CD14-positive monocyte (primary cell): ENCODE measurements at regions of chr11 and their contacts with region 1.

Region 1: GRCh38 chr11:65540297-65541092 is 15.6 kb downstream of the SCYL1 start:
- DNase-seq: peak; percentile 85 to 86 (median 85)
- H3K4me3 ChIP-seq: peak overlapping the region; percentile 48 to 90 (median 51)
- H3K4me3 Mint-ChIP-seq: peak overlapping the region; percentile 82 to 86
- H3K27ac ChIP-seq: peak overlapping the region; percentile 20 to 49
- H3K27ac Mint-ChIP-seq: peak overlapping the region; percentile 21 to 88 (median 85)
- H3K4me1 ChIP-seq: peaks cover 11 to 27% of the 10 kb centered on the region in 2 donors
- H3K4me1 Mint-ChIP-seq: peaks cover 13% of the 10 kb centered on the region
- H3K27me3 ChIP-seq: no peaks in the 10 kb centered on the region
- H3K27me3 Mint-ChIP-seq: peaks cover 5 to 8% (median 5%) of the 10 kb centered on the region in 3 donors
- CTCF ChIP-seq: peak; percentile 80

Region 2: GRCh38 chr11:65261591-65262380 is 278.7 kb before region 1 on chr11 and contains the start of gene POLA2:
- intact Hi-C with region 1: loop called in 1 of 2 experiments (anchors 10 kb)
- DNase-seq: peak; percentile 96 to 97 (median 97)
- H3K4me3 ChIP-seq: peak within 1 kb of the TSS; percentile 57 to 98 (median 91)
- H3K4me3 Mint-ChIP-seq: peak within 1 kb of the TSS; percentile 88 to 93
- H3K27ac ChIP-seq: peak within 1 kb of the TSS; percentile 90 to 94
- H3K27ac Mint-ChIP-seq: peak within 1 kb of the TSS; percentile 84 to 97 (median 92)
- H3K4me1 ChIP-seq: peaks cover 16 to 24% of the 10 kb centered on the region in 2 donors
- H3K4me1 Mint-ChIP-seq: peaks cover 29% of the 10 kb centered on the region
- H3K27me3 ChIP-seq: no peaks in the 10 kb centered on the region
- H3K27me3 Mint-ChIP-seq: peaks cover 0 to 9% (median 2%) of the 10 kb centered on the region in 3 donors
- CTCF ChIP-seq: no peak
- polyA plus RNA-seq, gene POLA2: 4.0 to 8.3 (median 5.2) TPM

Region 3: DNA sequence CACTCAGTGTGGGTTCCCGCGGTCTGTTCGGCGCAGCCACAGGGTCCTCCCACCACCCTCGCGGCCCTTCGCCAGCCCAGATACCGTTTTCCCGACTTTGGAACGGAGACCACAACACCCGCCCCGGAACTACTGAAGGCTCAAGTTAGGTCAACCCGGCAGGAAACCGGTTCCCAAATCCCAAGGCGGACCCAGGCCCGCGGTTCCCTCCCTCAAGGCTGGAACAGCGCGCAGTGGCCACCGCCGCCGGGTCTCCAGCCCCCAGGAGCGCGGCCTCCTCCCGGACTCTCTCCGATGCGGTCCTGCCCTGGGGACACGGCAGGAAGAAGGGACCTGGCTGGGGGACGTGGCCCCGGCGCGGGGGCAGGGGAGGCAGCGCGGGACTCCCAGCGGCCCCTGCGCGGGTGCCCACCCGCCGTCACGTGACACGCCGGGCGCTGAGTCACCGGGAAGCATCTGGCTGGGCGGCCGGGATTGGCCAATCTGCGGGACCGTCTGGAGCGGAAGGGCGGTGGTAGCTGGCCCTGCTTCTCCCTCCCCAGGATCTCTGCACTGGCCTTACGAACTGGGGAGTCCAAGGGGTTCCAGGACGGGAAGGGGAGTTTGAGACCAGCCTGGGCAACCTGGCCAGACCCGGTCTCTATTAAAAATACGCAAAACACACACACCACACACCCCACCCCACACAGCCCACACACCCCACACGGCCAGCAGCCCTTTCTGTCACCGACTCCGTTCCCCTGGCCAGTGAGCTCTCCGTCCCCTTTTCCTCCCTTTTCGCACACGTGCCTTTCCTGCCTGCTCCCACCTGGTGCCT is 63.1 kb before region 1 on chr11:
- intact Hi-C with region 1: no loop called
- DNase-seq: peak; percentile 96 to 98 (median 96)
- H3K4me3 ChIP-seq: peak overlapping the region; percentile 81 to 88 (median 82)
- H3K4me3 Mint-ChIP-seq: peak overlapping the region; percentile 93 to 94
- H3K27ac ChIP-seq: peak overlapping the region; percentile 97 to 100
- H3K27ac Mint-ChIP-seq: peak overlapping the region; percentile 98 to 100 (median 99)
- H3K4me1 ChIP-seq: peaks cover 39 to 50% of the 10 kb centered on the region in 2 donors
- H3K4me1 Mint-ChIP-seq: peaks cover 37% of the 10 kb centered on the region
- H3K27me3 ChIP-seq: no peaks in the 10 kb centered on the region
- H3K27me3 Mint-ChIP-seq: peaks cover 0 to 7% (median 2%) of the 10 kb centered on the region in 3 donors
- CTCF ChIP-seq: no peak

Region 4: GRCh38 chr11:65569973-65570918 is 29.8 kb after region 1 on chr11 and contains the start of gene ZNRD2:
- intact Hi-C with region 1: loop called in 1 of 2 experiments (anchors 2 kb)
- DNase-seq: peak; percentile 97 to 98 (median 98)
- H3K4me3 ChIP-seq: peak within 1 kb of the TSS; percentile 88 to 100 (median 96)
- H3K4me3 Mint-ChIP-seq: peak within 1 kb of the TSS; percentile 95 to 98
- H3K27ac ChIP-seq: peak within 1 kb of the TSS; percentile 95 to 96
- H3K27ac Mint-ChIP-seq: peak within 1 kb of the TSS; percentile 95 to 98 (median 98)
- H3K4me1 ChIP-seq: peaks cover 60 to 70% of the 10 kb centered on the region in 2 donors
- H3K4me1 Mint-ChIP-seq: peaks cover 68% of the 10 kb centered on the region
- H3K27me3 ChIP-seq: no peaks in the 10 kb centered on the region
- H3K27me3 Mint-ChIP-seq: peaks cover 0 to 2% (median 0%) of the 10 kb centered on the region in 3 donors
- CTCF ChIP-seq: peak; percentile 26
- polyA plus RNA-seq, gene ZNRD2: 48.5 to 65.1 (median 56.2) TPM

Region 5: GRCh38 chr11:65588199-65589054 is 47.9 kb after region 1 on chr11:
- intact Hi-C with region 1: loop called in 1 of 2 experiments (anchors 1 kb)
- DNase-seq: peak; percentile 66 to 83 (median 81)
- H3K4me3 ChIP-seq: peak overlapping the region; percentile 14 to 74 (median 16)
- H3K4me3 Mint-ChIP-seq: peak overlapping the region; percentile 73 to 87
- H3K27ac ChIP-seq: peak overlapping the region; percentile 86 to 89
- H3K27ac Mint-ChIP-seq: peak overlapping the region; percentile 91 to 98 (median 95)
- H3K4me1 ChIP-seq: peaks cover 44 to 63% of the 10 kb centered on the region in 2 donors
- H3K4me1 Mint-ChIP-seq: peaks cover 57% of the 10 kb centered on the region
- H3K27me3 ChIP-seq: no peaks in the 10 kb centered on the region
- H3K27me3 Mint-ChIP-seq: no peaks in the 10 kb centered on the region
- CTCF ChIP-seq: peak; percentile 73

Region 6: GRCh38 chr11:65615229-65615941 is 74.9 kb after region 1 on chr11 and contains the start of gene PCNX3:
- intact Hi-C with region 1: loop called (anchors 5 to 10 kb)
- DNase-seq: peak; percentile 100
- H3K4me3 ChIP-seq: peak within 1 kb of the TSS; percentile 79 to 96 (median 93)
- H3K4me3 Mint-ChIP-seq: peak within 1 kb of the TSS; percentile 89 to 96
- H3K27ac ChIP-seq: peak within 1 kb of the TSS; percentile 94 to 96
- H3K27ac Mint-ChIP-seq: peak within 1 kb of the TSS; percentile 96 to 99 (median 98)
- H3K4me1 ChIP-seq: peaks cover 40 to 54% of the 10 kb centered on the region in 2 donors
- H3K4me1 Mint-ChIP-seq: peaks cover 39% of the 10 kb centered on the region
- H3K27me3 ChIP-seq: no peaks in the 10 kb centered on the region
- H3K27me3 Mint-ChIP-seq: no peaks in the 10 kb centered on the region
- CTCF ChIP-seq: no peak
- polyA plus RNA-seq, gene PCNX3: 0.58 to 36.4 (median 1.7) TPM